ENCODE measurements at regions of chr11 and their contacts with region 1.

Region 1: GRCh38 chr11:111359223-111360149 is 19.6 kb downstream of the POU2AF1 start:
- DNase-seq: peak; percentile 55
- H3K4me3 Mint-ChIP-seq: peak overlapping the region; percentile 12
- H3K27ac Mint-ChIP-seq: no peak overlapping the region
- H3K4me1 Mint-ChIP-seq: peaks cover 15% of the 10 kb centered on the region
- H3K27me3 Mint-ChIP-seq: no peaks in the 10 kb centered on the region

Region 2: GRCh38 chr11:111422494-111423249 is 63.2 kb after region 1 on chr11:
- intact Hi-C with region 1: loop called (anchors 1 kb)
- DNase-seq: peak; percentile 84
- H3K4me3 Mint-ChIP-seq: no peak overlapping the region
- H3K27ac Mint-ChIP-seq: peak overlapping the region; percentile 22
- H3K4me1 Mint-ChIP-seq: peaks cover 23% of the 10 kb centered on the region
- H3K27me3 Mint-ChIP-seq: peaks cover 2% of the 10 kb centered on the region